ENCODE measurements at regions of chr11 and their contacts with region 1.

Region 1: DNA sequence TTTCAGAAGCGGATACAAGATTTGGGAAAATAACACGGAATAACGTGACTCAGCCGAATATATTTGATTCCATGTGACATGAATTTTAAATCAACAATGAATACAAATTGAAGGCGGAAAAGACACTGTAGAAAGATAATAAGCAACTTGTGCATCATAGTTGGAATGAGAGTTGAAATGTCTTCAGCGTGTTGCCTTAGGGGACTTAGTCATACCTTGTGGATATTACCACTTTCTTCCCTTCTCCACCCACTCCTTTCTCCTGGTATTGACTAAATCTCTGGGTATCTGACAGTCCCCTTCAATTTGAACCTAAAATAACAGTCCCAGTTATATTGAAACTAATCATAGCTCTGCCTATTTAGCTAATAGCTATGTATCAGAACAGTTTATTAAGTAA is 2373.1 kb upstream of the RAG2 start:
- DNase-seq: no peak
- ATAC-seq: no peak
- H3K4me3 ChIP-seq: no peak overlapping the region
- H3K4me3 Mint-ChIP-seq: no peak overlapping the region
- H3K27ac ChIP-seq: no peak overlapping the region
- H3K27ac Mint-ChIP-seq: no peak overlapping the region
- H3K4me1 ChIP-seq: no peaks in the 10 kb centered on the region
- H3K4me1 Mint-ChIP-seq: no peaks in the 10 kb centered on the region
- H3K27me3 ChIP-seq: no peaks in the 10 kb centered on the region
- H3K27me3 Mint-ChIP-seq: no peaks in the 10 kb centered on the region
- CTCF ChIP-seq: no peak

Region 2: DNA sequence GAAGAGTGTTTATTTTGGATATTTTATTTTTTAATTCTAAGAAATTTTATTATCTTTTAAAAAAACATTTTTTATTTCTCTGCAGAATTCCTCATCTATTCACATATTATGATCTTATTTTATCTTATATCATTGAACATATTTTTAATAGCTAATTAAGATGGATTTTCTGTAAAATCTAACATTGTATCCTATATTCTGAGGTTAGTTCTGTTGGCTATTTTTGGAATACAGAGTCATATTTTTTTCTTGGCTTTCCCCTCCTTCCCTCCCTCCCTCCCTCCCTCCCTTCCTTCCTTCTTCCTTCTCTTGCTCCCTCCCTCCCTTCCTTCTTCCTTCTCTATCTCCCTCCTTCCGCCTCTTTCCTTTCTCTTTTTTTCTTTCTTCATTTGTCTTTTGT is 46.5 kb before region 1 on chr11:
- CTCF ChIA-PET with region 1: no interaction called
- POLR2A ChIA-PET with region 1: no interaction called
- intact Hi-C with region 1: loop called in 1 of 2 experiments (anchors 10 kb)
- DNase-seq: no peak
- ATAC-seq: no peak
- H3K4me3 ChIP-seq: no peak overlapping the region
- H3K4me3 Mint-ChIP-seq: no peak overlapping the region
- H3K27ac ChIP-seq: no peak overlapping the region
- H3K27ac Mint-ChIP-seq: no peak overlapping the region
- H3K4me1 ChIP-seq: no peaks in the 10 kb centered on the region
- H3K4me1 Mint-ChIP-seq: no peaks in the 10 kb centered on the region
- H3K27me3 ChIP-seq: no peaks in the 10 kb centered on the region
- H3K27me3 Mint-ChIP-seq: no peaks in the 10 kb centered on the region
- CTCF ChIP-seq: no peak

Region 3: GRCh38 chr11:39489950-39490349 is 518.8 kb after region 1 on chr11:
- CTCF ChIA-PET with region 1: no interaction called
- POLR2A ChIA-PET with region 1: no interaction called
- intact Hi-C with region 1: no loop called
- DNase-seq: no peak
- ATAC-seq: no peak
- H3K4me3 ChIP-seq: no peak overlapping the region
- H3K4me3 Mint-ChIP-seq: no peak overlapping the region
- H3K27ac ChIP-seq: no peak overlapping the region
- H3K27ac Mint-ChIP-seq: no peak overlapping the region
- H3K4me1 ChIP-seq: no peaks in the 10 kb centered on the region
- H3K4me1 Mint-ChIP-seq: no peaks in the 10 kb centered on the region
- H3K27me3 ChIP-seq: no peaks in the 10 kb centered on the region
- H3K27me3 Mint-ChIP-seq: no peaks in the 10 kb centered on the region
- CTCF ChIP-seq: no peak